ENCODE measurements at regions of chr18 and their contacts with region 1.

Region 1: GRCh38 chr18:8754995-8755955 is 49.9 kb downstream of the MTCL1 start:
- DNase-seq: peak; percentile 77
- H3K4me3 Mint-ChIP-seq: no peak overlapping the region
- H3K27ac Mint-ChIP-seq: no peak overlapping the region
- H3K4me1 Mint-ChIP-seq: peaks cover 20% of the 10 kb centered on the region
- H3K27me3 Mint-ChIP-seq: peaks cover 2% of the 10 kb centered on the region

Region 2: DNA sequence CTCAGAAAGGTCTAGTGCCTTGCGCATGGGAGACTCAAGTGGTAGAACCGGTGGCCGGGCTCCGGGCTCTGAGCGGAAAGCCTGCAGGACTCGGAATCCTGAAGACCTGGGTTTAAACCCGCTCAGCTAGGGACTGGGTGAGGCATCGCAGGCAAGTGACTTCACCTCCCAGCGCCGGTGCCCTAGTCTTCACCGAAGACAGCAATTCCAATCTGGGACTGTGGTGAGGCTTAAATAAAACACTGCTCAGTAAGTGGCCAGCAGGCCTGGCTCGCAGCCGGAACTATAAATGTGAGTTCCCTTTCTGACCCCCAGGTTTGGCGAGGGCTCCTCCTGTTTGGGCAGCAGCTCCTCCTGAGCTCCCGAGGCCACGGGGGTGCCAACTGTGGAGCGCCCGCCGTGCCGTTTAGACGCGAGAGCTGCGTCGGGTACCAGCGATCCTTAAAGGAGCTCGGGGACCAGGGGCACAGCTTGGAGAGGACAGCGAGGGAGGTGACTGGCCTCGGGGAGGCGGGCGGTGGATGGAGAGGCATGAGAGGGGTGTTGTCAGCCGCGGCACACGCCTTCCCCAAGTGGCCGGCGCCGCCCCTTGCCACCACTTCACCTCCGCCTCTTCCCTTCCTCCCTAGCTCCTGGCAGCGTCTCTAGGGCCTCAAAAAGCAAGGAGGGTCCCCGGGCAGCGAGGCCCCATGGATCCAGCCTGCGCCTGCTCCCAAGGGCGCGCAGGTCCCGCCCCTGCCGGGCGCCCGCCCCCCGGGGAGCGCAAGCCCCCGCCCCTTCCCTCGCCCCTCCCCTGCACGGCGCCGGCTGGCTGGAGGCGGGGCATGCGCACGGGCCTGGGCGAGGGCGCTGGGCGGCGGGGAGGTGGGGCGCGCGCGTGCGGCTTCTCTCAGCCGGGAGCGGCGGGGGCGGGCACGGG is 50.7 kb before region 1 on chr18:
- CTCF ChIA-PET with region 1: interaction called, 3 read pairs
- intact Hi-C with region 1: loop called (anchors 1 kb)
- DNase-seq: peak; percentile 82
- H3K4me3 Mint-ChIP-seq: peak overlapping the region; percentile 80
- H3K27ac Mint-ChIP-seq: no peak overlapping the region
- H3K4me1 Mint-ChIP-seq: peaks cover 12% of the 10 kb centered on the region
- H3K27me3 Mint-ChIP-seq: peaks cover 45% of the 10 kb centered on the region